ENCODE measurements at regions of chr1 and their contacts with region 1.

Region 1: GRCh38 chr1:91165033-91165654 is 143.3 kb upstream of the ZNF644 start:
- DNase-seq: no peak
- H3K4me3 ChIP-seq: no peak overlapping the region
- H3K27me3 ChIP-seq: no peaks in the 10 kb centered on the region
- CTCF ChIP-seq: peak; percentile 98

Region 2: GRCh38 chr1:90579212-90579802 is 585.8 kb before region 1 on chr1:
- CTCF ChIA-PET with region 1: interaction called, 23 read pairs
- POLR2A ChIA-PET with region 1: no interaction called
- DNase-seq: no peak
- H3K4me3 ChIP-seq: no peak overlapping the region
- H3K27me3 ChIP-seq: no peaks in the 10 kb centered on the region
- CTCF ChIP-seq: peak; percentile 50

Region 3: DNA sequence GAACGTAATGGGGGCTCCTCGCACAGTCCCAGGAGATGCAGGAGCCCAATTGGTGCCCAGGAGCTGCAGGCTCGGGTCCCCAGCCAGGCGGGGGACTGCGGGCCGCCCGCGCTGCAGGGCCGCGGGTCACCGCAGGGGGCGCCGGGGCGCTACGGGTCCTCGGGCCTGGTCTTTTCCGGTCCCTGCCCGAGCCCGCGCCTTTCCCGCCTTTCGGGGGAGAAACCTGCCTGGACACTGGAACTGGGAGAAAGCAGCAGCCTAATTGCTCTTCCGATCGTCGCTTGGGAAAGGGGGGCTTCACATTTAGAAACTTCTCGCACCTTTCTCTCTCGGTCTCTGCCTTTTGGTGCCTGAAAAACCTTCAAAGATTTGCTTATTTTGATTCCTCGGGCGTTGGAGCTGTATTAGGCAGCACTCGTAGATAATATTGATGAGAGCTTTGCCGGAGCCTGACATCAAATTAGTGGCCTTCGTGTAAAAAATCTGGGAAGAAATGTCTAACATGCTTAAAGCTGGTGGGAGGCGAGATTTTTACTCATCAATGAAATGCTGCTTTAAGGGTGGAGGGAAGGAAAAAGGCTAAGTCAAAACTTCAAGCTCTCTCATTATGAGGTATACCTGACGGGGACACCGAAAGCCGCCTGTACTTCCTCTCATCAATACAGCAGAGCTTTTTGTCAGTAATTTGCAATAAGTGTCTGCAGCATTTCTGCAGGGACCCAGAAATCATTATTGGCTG is 435.5 kb before region 1 on chr1:
- CTCF ChIA-PET with region 1: interaction called, 14 read pairs
- POLR2A ChIA-PET with region 1: no interaction called
- DNase-seq: no peak
- H3K4me3 ChIP-seq: no peak overlapping the region
- H3K27me3 ChIP-seq: peaks cover 60% of the 10 kb centered on the region
- CTCF ChIP-seq: no peak

Region 4: DNA sequence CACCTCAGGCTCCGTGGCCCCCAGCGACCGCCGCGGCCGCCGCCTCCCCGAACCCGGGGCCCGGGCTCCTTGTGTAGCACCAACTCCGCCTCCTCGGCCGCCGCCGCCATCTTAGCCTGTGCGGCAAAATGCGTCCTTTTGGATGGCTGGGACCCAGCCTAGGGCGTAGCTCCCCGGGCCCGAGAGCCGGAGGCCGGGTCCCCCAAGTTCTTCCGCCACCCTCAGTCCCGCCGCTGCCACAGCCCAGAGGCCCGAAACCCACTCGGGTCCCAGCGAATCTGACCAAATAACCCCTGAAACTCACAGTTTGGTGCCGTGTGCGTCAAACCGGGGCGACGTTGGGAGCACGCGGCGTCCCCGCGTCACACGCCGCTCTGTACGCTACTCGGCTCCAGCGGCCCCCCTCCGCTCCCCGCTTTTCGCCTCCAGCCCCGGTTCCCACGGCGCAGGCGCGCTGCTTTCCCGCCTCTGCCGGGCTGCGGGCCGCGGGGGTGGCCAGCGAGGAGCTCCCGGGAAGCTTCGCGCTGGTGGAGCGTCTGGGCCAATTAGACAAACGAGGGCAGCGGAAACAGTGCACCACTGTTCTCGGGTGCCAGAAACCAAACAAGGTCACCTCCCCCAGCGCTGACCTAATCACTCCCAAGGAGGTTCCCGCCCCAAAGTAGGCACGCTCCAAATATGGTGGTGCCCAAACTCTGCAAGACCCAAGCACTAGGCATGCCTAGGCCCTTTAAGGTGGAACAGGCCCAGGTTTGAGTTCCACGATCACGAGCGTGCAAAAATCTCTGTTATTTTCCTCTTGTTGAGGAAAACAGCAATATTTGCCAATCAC is 143.2 kb before region 1 on chr1 and contains the start of gene ZNF644:
- CTCF ChIA-PET with region 1: no interaction called
- POLR2A ChIA-PET with region 1: no interaction called
- DNase-seq: peak; percentile 52
- H3K4me3 ChIP-seq: peak within 1 kb of the TSS; percentile 95
- H3K27me3 ChIP-seq: no peaks in the 10 kb centered on the region
- CTCF ChIP-seq: no peak
- polyA plus RNA-seq, gene ZNF644: 7.3 and 15.5 TPM in 2 replicates

Region 5: GRCh38 chr1:91189096-91189495 is 24.0 kb after region 1 on chr1:
- CTCF ChIA-PET with region 1: interaction called, 11 read pairs
- POLR2A ChIA-PET with region 1: no interaction called
- DNase-seq: no peak
- H3K4me3 ChIP-seq: no peak overlapping the region
- H3K27me3 ChIP-seq: no peaks in the 10 kb centered on the region
- CTCF ChIP-seq: no peak

Region 6: GRCh38 chr1:91278754-91279153 is 113.6 kb after region 1 on chr1:
- CTCF ChIA-PET with region 1: interaction called, 32 read pairs
- POLR2A ChIA-PET with region 1: no interaction called
- DNase-seq: no peak
- H3K4me3 ChIP-seq: no peak overlapping the region
- H3K27me3 ChIP-seq: no peaks in the 10 kb centered on the region
- CTCF ChIP-seq: peak; percentile 12; the same call in 1 of the 2 replicates

Measured in BJ (cell line).